Activated CD4-positive, alpha-beta memory T cell treated with anti-CD3 and anti-CD28 coated beads for 36 hours (primary cell): ENCODE measurements at regions of chr4 and their contacts with region 1.

Region 1: GRCh38 chr4:42633605-42634388 is 23.1 kb downstream of the ATP8A1 start:
- DNase-seq: no peak
- H3K4me3 Mint-ChIP-seq: no peak overlapping the region
- H3K27ac Mint-ChIP-seq: peak overlapping the region; percentile 30
- H3K4me1 Mint-ChIP-seq: peaks cover 56% of the 10 kb centered on the region
- H3K27me3 Mint-ChIP-seq: no peaks in the 10 kb centered on the region

Region 2: GRCh38 chr4:42607011-42607726 is 26.6 kb before region 1 on chr4:
- CTCF ChIA-PET with region 1: no interaction called
- POLR2A ChIA-PET with region 1: interaction called, 3 read pairs
- intact Hi-C with region 1: loop called (anchors 2 kb)
- DNase-seq: no peak
- H3K4me3 Mint-ChIP-seq: no peak overlapping the region
- H3K27ac Mint-ChIP-seq: peak overlapping the region; percentile 20
- H3K4me1 Mint-ChIP-seq: peaks cover 19% of the 10 kb centered on the region
- H3K27me3 Mint-ChIP-seq: no peaks in the 10 kb centered on the region